Activated naive CD4-positive, alpha-beta T cell treated with anti-CD3 and anti-CD28 coated beads for 36 hours (primary cell): ENCODE measurements at regions of chr7 and their contacts with region 1.

Region 1: DNA sequence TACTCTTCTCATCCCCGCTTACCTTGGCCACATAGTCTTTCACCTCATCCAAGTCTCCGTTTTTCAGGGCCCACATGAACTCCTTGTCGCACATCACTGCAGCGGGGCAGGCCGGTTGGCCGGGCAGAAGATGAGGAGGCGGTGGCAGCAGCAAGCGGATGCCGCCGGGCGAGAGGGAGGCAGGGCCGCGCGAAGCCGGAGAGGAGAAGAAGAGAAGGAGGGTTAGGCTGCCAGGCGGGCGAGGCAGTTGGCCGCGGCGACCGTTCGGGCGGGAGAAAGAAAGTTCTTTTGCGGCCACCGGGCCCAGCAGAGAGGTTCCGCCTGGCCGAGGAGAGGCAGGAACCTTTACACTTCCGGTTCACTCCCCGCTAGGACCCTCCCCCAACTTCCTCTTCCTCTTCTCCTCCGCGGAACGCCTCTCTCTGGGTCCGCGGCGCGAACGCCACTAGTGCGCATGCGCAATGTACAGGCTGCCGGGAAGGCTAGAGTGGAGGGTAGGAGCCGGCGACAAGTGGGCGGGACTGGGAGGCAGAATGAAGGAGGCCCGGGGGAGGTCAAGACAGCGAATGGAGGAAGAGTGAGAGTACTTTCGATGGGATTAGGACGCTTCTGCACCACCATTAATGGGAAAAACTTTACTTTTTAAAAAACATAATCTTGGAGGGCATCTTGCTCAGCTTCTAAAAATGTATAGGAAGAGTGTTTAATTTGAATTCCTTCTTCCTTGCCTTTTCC is at the start of gene MTPN:
- DNase-seq: peak; percentile 98
- H3K4me3 Mint-ChIP-seq: peak within 1 kb of the TSS; percentile 98
- H3K27ac Mint-ChIP-seq: peak within 1 kb of the TSS; percentile 86
- H3K4me1 Mint-ChIP-seq: peaks cover 71% of the 10 kb centered on the region
- H3K27me3 Mint-ChIP-seq: no peaks in the 10 kb centered on the region
- total RNA-seq, gene MTPN: 106 to 108 TPM

Region 2: GRCh38 chr7:134646425-134647305 is 1330.5 kb before region 1 on chr7 and contains the start of gene BPGM:
- CTCF ChIA-PET with region 1: no interaction called
- intact Hi-C with region 1: loop called (anchors 5 kb)
- DNase-seq: peak; percentile 99
- H3K4me3 Mint-ChIP-seq: no peak within 1 kb of the TSS
- H3K27ac Mint-ChIP-seq: no peak within 1 kb of the TSS
- H3K4me1 Mint-ChIP-seq: peaks cover 37% of the 10 kb centered on the region
- H3K27me3 Mint-ChIP-seq: no peaks in the 10 kb centered on the region
- total RNA-seq, gene BPGM: 13.9 to 14.2 TPM

Region 3: GRCh38 chr7:135211179-135211945 is 765.8 kb before region 1 on chr7 and contains the start of gene WDR91:
- CTCF ChIA-PET with region 1: no interaction called
- intact Hi-C with region 1: loop called (anchors 5 kb)
- DNase-seq: peak; percentile 96
- H3K4me3 Mint-ChIP-seq: peak within 1 kb of the TSS; percentile 98
- H3K27ac Mint-ChIP-seq: peak within 1 kb of the TSS; percentile 85
- H3K4me1 Mint-ChIP-seq: peaks cover 41% of the 10 kb centered on the region
- H3K27me3 Mint-ChIP-seq: no peaks in the 10 kb centered on the region
- total RNA-seq, gene WDR91: 10.6 to 11.1 TPM

Region 4: DNA sequence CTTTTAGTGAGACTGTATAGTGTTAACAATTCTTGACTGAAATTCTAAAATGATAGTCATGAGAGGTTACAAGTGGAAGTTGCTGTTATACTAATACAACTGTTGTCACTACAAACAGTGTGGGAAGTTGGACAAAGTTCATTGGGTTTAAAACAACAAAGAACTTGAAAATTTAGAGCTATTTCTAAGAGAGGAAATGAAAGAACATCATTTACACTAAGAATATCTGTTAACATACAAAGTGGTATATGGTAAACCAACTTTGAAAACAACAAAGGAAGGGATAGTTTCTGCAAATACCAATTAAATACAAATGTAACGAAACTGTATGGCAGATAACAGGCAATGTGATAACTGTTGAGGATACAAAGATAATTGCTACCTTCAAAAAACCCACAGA is 11.6 kb before region 1 on chr7:
- CTCF ChIA-PET with region 1: interaction called, 8 read pairs
- intact Hi-C with region 1: loop called (anchors 1 kb)
- DNase-seq: no peak
- H3K4me3 Mint-ChIP-seq: no peak overlapping the region
- H3K27ac Mint-ChIP-seq: no peak overlapping the region
- H3K4me1 Mint-ChIP-seq: peaks cover 64% of the 10 kb centered on the region
- H3K27me3 Mint-ChIP-seq: no peaks in the 10 kb centered on the region

Region 5: DNA sequence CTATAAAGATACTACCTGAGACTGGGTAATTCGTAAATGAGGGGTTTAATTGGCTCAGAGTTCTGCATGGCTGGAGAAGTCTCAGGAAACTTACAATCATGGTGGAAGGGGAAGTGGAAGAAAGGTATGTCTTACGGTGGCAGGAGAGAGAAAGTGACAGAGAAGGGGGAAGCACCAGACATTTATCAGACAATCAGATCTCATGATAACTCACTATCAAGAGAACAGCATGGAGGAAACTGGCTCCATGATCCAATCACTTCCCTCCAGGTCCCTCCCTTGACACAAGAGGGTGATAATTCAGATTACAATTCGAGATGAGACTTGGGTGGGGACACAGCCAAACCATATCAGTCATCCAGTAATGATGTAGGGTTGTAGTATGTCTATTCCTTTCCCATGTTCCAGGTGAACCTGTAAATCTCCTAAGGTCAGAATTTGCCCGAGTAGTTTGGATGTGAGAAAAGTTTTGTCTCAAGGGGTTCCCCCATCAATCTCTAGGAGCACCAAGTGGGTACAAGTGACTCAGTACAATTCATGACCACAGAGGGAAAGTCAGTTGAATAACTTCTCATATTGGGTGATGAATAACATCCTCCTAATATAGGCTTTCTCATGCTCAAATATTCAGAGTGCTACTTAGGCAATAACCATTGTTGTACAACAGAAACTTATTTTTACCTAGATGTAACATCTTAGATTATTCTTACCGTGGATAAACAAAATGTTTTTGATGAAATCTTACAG is 39.6 kb after region 1 on chr7:
- CTCF ChIA-PET with region 1: interaction called, 3 read pairs
- intact Hi-C with region 1: loop called (anchors 1 kb)
- DNase-seq: peak; percentile 10
- H3K4me3 Mint-ChIP-seq: no peak overlapping the region
- H3K27ac Mint-ChIP-seq: no peak overlapping the region
- H3K4me1 Mint-ChIP-seq: peaks cover 26% of the 10 kb centered on the region
- H3K27me3 Mint-ChIP-seq: peaks cover 26% of the 10 kb centered on the region